ENCODE measurements at regions of chr1 and their contacts with region 1.

Region 1: DNA sequence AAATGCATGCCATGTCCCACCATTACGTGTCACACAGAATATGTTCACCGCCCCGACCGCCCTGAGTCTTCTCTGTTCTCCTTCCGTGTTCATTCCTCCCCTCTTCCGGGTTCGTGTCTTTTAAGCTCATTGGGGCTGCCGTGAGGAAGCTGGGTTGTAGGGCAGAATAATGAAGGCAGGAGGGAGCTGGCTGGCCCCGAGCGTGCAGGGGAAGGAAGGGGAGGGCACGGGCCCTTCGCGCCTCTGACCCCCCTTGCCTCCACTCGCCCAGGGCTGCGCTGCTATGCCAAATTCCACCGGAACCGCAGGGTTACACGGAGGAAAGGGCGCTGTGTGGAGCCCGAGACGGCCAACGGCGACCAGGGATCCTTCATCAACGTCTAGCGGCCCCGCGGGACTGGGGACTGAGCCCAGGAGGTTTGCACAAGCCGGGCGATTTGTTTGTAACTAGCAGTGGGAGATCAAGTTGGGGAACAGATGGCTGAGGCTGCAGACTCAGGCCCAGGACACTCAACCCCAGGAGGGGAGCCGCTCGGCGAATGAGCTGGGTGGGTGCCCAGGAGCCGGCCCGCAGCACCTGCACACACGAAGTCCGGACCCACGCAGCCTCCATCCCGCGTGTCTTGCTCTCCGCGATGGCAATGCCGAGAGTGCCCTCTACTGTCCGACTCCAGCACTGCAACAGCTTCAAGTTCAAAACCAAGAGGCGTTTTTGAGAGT is 16.5 kb upstream of the AGTRAP start:
- DNase-seq: peak; percentile 96

Region 2: DNA sequence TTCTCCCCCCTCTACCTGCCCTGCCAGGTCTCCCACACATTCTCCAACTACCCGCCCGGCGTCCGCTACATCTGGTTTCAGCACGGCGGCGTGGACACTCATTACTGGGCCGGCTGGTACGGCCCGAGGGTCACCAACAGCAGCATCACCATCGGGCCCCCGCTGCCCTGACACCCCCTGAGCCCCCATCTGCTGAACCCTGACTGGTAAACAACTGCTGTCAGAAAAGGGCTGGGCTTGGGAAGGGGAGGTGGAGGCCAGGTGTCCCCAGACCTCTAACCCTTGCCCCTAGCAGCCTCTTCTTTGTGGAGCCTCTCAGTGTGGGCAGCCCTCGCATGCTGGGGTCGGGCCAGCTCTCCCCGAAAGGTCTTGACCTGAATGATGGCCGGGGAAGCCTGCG is 58.4 kb before region 1 on chr1:
- intact Hi-C with region 1: loop called in 1 of 2 experiments (anchors 5 kb)
- DNase-seq: no peak

Measured in posterior vena cava (tissue), 2 donors.